GM10248 (cell line): ENCODE measurements at regions of chr16 and their contacts with region 1.

Region 1: DNA sequence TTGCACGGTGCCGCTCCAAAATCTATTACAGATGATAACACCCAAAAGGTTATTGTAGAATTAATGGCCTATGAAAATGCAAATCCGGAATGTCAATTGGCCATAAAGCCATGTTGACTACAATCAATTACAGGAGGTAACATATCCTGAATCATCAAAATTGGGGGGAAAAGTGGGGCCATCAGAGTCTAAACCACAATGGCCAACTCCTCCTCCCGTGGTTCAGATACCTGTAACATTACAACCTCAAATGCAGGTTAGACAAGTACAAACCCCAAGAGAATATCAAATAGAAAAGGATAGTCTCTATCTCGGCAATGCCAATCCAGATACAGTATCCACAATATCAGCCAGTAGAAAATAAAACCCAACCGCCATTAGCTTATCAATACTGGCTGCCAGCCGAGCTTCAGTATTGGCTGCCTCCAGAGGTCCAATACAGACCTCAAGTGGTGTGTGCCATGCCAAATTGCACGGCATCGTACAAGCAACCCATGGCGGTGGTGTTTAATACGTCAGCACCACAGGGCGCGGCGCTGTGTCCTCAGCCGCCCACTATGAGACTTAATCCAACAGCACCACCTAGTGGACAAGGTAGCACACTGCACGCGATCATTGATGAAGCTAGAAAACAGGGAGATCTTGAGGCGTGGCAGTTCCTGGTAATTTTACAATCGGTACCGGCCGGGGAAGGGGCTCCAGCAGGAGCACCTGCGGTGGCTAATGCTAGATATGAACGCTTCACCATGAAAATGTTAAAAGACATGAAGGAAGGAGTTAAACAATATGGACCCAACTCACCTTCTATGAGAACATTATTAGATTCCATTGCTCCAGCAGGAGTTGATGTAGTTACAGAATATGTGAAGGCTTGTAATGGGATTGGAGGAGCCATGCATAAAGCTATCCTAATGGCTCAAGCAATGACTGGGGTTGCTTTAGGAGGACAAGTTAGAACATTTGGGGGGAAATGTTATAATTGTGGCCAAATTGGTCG is 15.2 kb downstream of the FLYWCH1 start:
- DNase-seq: peak; percentile 80
- CTCF ChIP-seq: peak; percentile 98

Region 2: GRCh38 chr16:2874912-2875362 is 52.0 kb before region 1 on chr16:
- CTCF ChIA-PET with region 1: interaction called, 35 read pairs
- POLR2A ChIA-PET with region 1: no interaction called
- DNase-seq: peak; percentile 85
- CTCF ChIP-seq: peak; percentile 98

Region 3: GRCh38 chr16:2911580-2912329 is 15.2 kb before region 1 on chr16 and contains the start of gene FLYWCH1:
- CTCF ChIA-PET with region 1: interaction called, 125 read pairs
- POLR2A ChIA-PET with region 1: no interaction called
- DNase-seq: peak; percentile 96
- CTCF ChIP-seq: no peak

Region 4: GRCh38 chr16:2952679-2953078 is 25.7 kb after region 1 on chr16:
- CTCF ChIA-PET with region 1: interaction called, 20 read pairs
- POLR2A ChIA-PET with region 1: interaction called, 3 read pairs
- DNase-seq: no peak
- CTCF ChIP-seq: no peak